Kidney (tissue), 22 donors: ENCODE measurements at regions of chr21 and their contacts with region 1.

Region 1: DNA sequence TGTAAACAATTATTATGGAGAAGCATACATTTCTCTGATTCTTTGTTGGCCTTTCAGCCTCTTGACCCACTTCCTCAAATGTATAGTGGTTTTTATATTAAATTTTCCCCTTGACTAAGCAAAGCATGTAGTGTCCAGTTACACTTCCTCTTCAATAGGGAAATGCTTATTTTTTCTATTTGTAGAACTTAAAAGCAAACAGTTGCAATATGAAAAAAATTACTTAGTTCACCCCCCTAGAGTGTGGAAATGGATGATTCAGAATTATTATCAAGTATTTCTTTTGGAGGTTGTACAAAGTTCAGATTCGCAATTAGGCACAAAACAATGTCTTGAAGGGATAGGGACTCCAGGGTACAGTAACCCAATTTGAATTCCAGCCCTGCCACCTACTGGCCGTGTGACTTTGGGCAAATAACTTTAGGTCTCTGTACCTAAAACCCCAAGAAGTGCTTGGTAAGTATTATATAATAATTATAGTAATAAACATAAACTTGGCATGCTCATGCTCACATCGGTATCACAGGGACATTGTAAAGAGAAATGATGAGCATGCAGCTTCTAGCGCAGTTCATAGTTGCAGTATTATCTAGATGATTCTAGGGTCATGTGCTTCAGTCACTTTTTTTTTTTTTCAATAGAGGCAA is 28.6 kb upstream of the IFNGR2 start:
- DNase-seq: peak in 2 of 5 donors; percentile 34 to 53
- H3K4me3 ChIP-seq: no peak overlapping the region
- H3K27ac ChIP-seq: no peak overlapping the region
- H3K4me1 ChIP-seq: no peaks in the 10 kb centered on the region
- H3K27me3 ChIP-seq: no peaks in the 10 kb centered on the region
- CTCF ChIP-seq: peak; percentile 67

Region 2: DNA sequence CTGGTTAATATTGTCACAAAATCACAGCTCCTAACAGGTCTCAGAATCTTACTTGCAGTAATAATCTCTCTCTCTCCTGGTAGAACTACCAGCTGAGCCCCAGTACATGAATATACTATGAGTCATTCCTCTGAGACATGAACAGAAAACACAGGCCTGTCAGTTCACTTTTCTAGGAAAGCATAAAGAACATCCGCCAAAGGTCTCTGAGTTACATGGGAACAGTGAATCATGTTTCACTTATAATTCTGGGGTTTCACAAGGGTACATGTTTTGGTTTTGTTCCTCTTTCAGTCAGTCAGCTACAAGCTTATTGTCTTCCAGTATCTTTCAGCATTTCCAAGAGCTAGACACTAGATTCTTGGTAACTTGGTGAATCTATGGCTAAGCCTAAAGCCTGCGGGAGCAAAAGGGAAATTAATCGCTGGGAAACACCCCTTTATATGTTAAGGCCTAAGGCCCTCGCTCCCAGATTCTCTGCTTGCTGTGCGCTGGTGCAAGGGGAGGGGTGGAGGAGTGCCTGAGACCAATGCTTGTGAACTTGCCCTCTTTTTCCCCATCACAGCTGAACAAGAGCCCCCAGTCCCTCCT is 60.3 kb after region 1 on chr21:
- intact Hi-C with region 1: loop called (anchors 10 kb)
- DNase-seq: peak in 2 of 5 donors; percentile 11 to 28
- H3K4me3 ChIP-seq: no peak overlapping the region
- H3K27ac ChIP-seq: peak overlapping the region in 1 of 2 donors; percentile 53
- H3K4me1 ChIP-seq: peaks cover 0 to 2% (median 0%) of the 10 kb centered on the region in 3 donors
- H3K27me3 ChIP-seq: no peaks in the 10 kb centered on the region
- CTCF ChIP-seq: no peak

Region 3: GRCh38 chr21:33801424-33802420 is 427.1 kb after region 1 on chr21:
- intact Hi-C with region 1: no loop called
- DNase-seq: peak in 3 of 5 donors; percentile 54 to 74 (median 68)
- H3K4me3 ChIP-seq: no peak overlapping the region
- H3K27ac ChIP-seq: no peak overlapping the region
- H3K4me1 ChIP-seq: no peaks in the 10 kb centered on the region
- H3K27me3 ChIP-seq: no peaks in the 10 kb centered on the region
- CTCF ChIP-seq: no peak